ENCODE measurements at regions of chr4 and their contacts with region 1.

Region 1: DNA sequence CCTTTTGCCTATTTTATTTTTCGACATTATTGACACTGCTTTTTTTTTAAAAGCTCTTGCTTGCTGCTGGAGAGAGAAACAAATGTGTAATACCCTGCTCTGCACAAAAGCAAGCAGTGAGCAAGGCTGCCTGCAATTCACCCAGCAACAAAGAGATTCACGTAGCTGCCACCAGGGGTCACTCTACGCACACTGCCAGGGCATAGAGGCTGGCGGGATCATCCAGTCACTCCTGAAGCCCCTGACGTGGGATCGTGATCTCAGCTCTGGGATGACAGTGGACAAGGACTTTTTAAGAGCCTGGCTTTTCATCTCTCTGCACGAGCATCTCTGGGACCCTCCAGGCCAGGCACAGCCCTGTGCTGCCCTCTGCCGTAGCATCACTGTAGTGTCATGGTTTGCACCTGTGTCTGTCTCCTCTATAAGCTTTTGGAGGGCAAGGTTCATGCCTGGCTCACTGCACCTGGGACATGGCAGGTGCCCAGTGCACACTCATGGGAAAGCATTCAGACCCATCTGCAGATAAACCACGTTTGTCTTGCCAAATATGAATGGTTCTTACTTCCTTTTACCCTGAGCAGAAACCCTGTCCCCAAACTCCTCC is 19.8 kb downstream of the C4orf50 start:
- DNase-seq: peak; percentile 61 to 64
- ATAC-seq: peak; percentile 86 to 95
- H3K4me3 ChIP-seq: no peak overlapping the region
- H3K27ac ChIP-seq: no peak overlapping the region
- H3K4me1 ChIP-seq: no peaks in the 10 kb centered on the region
- CTCF ChIP-seq: peak; percentile 91
- EP300 ChIP-seq: no peak
- POLR2A ChIP-seq: no peak
- RAD21 ChIP-seq: peak; percentile 79 to 82

Region 2: DNA sequence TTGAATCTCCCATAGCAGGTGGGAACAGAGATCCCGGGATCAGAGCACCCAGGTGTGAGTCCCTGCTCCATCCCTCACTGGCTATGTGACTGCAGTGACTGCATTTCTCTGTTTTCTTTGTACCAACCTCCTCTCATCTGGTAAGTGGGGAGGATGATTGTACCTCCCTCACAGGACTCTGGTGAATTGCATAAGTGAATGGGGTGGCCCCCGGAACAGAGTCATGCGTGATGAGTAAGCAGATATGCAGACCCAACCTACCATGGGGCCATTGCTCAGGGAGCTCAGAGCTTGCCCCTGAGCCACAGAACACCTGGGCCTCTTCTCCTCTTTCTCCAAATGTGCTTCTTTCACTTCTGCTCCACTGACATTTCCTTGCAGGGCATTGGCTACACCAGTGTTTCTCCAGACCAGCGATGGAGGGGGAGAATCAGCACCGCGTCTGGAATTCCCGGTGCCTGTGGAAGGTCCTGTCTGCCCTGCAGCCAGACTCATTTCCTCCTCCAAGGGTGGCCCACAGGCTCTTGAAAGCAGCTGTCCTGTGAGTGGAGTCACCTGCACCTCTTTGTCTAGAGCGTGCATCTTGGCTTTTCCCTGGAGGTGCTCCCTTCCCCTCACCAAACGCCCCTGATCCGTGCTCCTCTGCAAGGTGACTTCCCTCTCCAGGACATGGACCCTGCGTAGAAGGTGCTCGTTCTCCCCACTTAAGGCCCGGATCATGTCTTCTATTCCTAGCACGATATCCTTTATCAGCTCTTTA is 10.2 kb before region 1 on chr4:
- CTCF ChIA-PET with region 1: interaction called, 14 read pairs
- POLR2A ChIA-PET with region 1: no interaction called
- DNase-seq: no peak
- ATAC-seq: no peak; a peak in 1 of 6 replicates
- H3K4me3 ChIP-seq: no peak overlapping the region
- H3K27ac ChIP-seq: no peak overlapping the region
- H3K4me1 ChIP-seq: no peaks in the 10 kb centered on the region
- CTCF ChIP-seq: no peak
- EP300 ChIP-seq: no peak
- POLR2A ChIP-seq: no peak
- RAD21 ChIP-seq: no peak

Region 3: GRCh38 chr4:6019316-6020263 is 21.2 kb after region 1 on chr4:
- CTCF ChIA-PET with region 1: interaction called, 35 read pairs
- POLR2A ChIA-PET with region 1: no interaction called
- DNase-seq: peak; percentile 44 to 51
- ATAC-seq: peak; percentile 74 to 91; a peak in 3 of 6 replicates
- H3K4me3 ChIP-seq: no peak overlapping the region
- H3K27ac ChIP-seq: no peak overlapping the region
- H3K4me1 ChIP-seq: no peaks in the 10 kb centered on the region
- CTCF ChIP-seq: peak; percentile 64
- EP300 ChIP-seq: no peak
- POLR2A ChIP-seq: no peak
- RAD21 ChIP-seq: peak; percentile 20 to 51; a peak in 3 of 5 replicates

Region 4: GRCh38 chr4:6087673-6088341 is 89.4 kb after region 1 on chr4:
- CTCF ChIA-PET with region 1: interaction called, 50 read pairs
- POLR2A ChIA-PET with region 1: no interaction called
- DNase-seq: peak; percentile 15 to 54
- ATAC-seq: peak; percentile 87 to 89
- H3K4me3 ChIP-seq: no peak overlapping the region
- H3K27ac ChIP-seq: no peak overlapping the region
- H3K4me1 ChIP-seq: no peaks in the 10 kb centered on the region
- CTCF ChIP-seq: peak; percentile 47
- EP300 ChIP-seq: no peak
- POLR2A ChIP-seq: no peak
- RAD21 ChIP-seq: peak; percentile 45 to 63

Measured in A549 (cell line).